ENCODE measurements at regions of chr9 and their contacts with region 1.

Region 1: DNA sequence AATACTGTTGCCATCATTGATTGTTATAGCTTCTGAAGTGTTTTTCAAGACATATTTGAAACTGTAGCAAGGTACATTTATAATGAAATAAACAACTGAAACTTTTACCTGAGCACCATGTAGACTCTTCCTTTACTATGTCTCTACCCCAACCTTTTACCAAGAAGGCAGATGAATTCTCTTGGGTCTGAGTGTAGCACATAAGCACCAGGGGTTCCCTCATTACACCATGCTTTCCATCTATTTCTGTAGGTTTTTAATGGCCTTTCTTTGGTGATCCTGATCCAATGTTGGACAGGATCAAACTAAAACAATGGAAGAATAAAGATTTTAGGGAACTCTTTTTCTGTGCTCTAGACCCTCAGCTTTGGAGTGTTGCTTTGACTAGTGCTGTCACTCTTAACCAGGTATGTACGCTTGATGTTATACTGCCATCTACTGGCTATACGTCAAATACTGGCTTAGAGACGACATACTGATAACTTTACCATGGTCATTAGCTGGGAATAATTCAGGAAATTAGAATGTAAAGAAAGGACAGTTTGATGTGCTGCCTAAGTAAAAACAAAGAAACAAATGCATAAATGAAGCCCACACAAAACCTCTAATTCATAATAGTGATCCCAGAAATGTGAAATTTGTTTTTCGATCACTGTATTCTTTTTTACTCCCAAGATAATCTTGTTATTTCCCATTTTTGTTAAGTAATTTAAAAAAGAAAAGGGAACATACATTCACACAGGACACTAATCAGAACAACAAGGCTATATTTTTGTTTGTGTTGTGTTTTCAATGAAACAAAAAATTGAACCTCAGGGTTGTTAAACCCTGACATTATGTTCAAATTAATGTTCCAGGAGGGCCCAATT is 30.7 kb downstream of the IFNW1 start:
- DNase-seq: peak; percentile 74
- H3K4me3 ChIP-seq: no peak overlapping the region
- H3K27ac ChIP-seq: no peak overlapping the region
- H3K4me1 ChIP-seq: peaks cover 4% of the 10 kb centered on the region
- H3K27me3 ChIP-seq: no peaks in the 10 kb centered on the region
- CTCF ChIP-seq: peak; percentile 69

Region 2: GRCh38 chr9:20356403-20357035 is 754.4 kb before region 1 on chr9:
- CTCF ChIA-PET with region 1: interaction called, 4 read pairs
- POLR2A ChIA-PET with region 1: no interaction called
- intact Hi-C with region 1: loop called (anchors 2 kb)
- DNase-seq: peak; percentile 84
- H3K4me3 ChIP-seq: no peak overlapping the region
- H3K27ac ChIP-seq: peak overlapping the region; percentile 53
- H3K4me1 ChIP-seq: peaks cover 52% of the 10 kb centered on the region
- H3K27me3 ChIP-seq: no peaks in the 10 kb centered on the region
- CTCF ChIP-seq: peak; percentile 68

Region 3: GRCh38 chr9:21135504-21136135 is 24.7 kb after region 1 on chr9:
- CTCF ChIA-PET with region 1: no interaction called
- POLR2A ChIA-PET with region 1: no interaction called
- intact Hi-C with region 1: no loop called
- DNase-seq: no peak
- H3K4me3 ChIP-seq: no peak overlapping the region
- H3K27ac ChIP-seq: no peak overlapping the region
- H3K4me1 ChIP-seq: no peaks in the 10 kb centered on the region
- H3K27me3 ChIP-seq: no peaks in the 10 kb centered on the region
- CTCF ChIP-seq: no peak

Region 4: DNA sequence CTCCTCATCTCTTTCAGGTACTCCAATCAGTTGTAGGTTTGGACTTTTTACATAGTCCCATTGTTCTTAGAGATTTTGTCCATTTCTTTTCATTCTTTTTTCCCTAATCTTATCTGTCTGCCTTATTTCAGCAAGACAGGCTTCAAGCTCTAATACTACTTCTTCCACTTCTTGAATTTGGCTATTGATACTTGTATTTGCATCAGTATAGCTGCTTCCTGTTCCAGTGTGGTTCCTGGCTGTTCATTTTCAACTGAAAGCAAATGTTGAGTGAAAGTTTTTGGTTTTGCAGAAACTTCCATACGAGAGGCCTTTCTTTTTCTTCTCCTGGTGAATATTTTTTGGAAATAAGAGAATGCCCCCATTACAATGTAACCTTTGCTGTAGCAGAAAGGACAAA is 317.3 kb after region 1 on chr9:
- CTCF ChIA-PET with region 1: no interaction called
- POLR2A ChIA-PET with region 1: no interaction called
- intact Hi-C with region 1: no loop called
- DNase-seq: no peak
- H3K4me3 ChIP-seq: no peak overlapping the region
- H3K27ac ChIP-seq: no peak overlapping the region
- H3K4me1 ChIP-seq: no peaks in the 10 kb centered on the region
- H3K27me3 ChIP-seq: no peaks in the 10 kb centered on the region
- CTCF ChIP-seq: no peak